CD8-positive, alpha-beta T cell (primary cell): ENCODE measurements at regions of chr18 and their contacts with region 1.

Region 1: GRCh38 chr18:28504100-28504499 is 327.2 kb upstream of the CDH2 start:
- DNase-seq: no peak
- ATAC-seq: no peak
- H3K4me3 ChIP-seq: no peak overlapping the region
- H3K4me3 Mint-ChIP-seq: no peak overlapping the region
- H3K27ac ChIP-seq: no peak overlapping the region
- H3K27ac Mint-ChIP-seq: no peak overlapping the region
- H3K4me1 ChIP-seq: no peaks in the 10 kb centered on the region
- H3K4me1 Mint-ChIP-seq: no peaks in the 10 kb centered on the region
- H3K27me3 ChIP-seq: no peaks in the 10 kb centered on the region
- H3K27me3 Mint-ChIP-seq: no peaks in the 10 kb centered on the region
- CTCF ChIP-seq: no peak

Region 2: DNA sequence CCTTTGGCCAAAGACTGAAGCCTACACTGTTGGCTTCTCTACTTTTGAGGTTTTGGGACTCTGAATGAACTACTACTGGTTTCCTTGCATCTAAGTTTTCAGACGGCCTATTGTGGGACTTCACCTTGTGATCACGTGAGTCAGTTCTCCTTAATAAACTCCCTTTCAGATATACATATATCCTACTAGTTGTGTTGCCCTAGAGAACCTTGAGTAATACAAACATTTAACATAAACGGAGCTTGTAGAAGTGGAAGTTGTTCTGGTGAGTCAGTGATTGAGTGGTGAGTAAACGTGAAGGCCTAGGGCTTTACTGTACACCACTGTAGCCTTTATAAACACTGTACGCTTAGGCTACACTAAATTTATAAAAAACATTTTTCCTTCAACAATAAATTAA is 220.0 kb before region 1 on chr18:
- CTCF ChIA-PET with region 1: no interaction called
- POLR2A ChIA-PET with region 1: no interaction called
- intact Hi-C with region 1: no loop called
- DNase-seq: no peak
- ATAC-seq: no peak
- H3K4me3 ChIP-seq: no peak overlapping the region
- H3K4me3 Mint-ChIP-seq: no peak overlapping the region
- H3K27ac ChIP-seq: no peak overlapping the region
- H3K27ac Mint-ChIP-seq: no peak overlapping the region
- H3K4me1 ChIP-seq: no peaks in the 10 kb centered on the region
- H3K4me1 Mint-ChIP-seq: no peaks in the 10 kb centered on the region
- H3K27me3 ChIP-seq: no peaks in the 10 kb centered on the region
- H3K27me3 Mint-ChIP-seq: no peaks in the 10 kb centered on the region
- CTCF ChIP-seq: no peak

Region 3: GRCh38 chr18:28459587-28459986 is 44.5 kb before region 1 on chr18:
- CTCF ChIA-PET with region 1: no interaction called
- POLR2A ChIA-PET with region 1: no interaction called
- intact Hi-C with region 1: loop called in 1 of 2 experiments (anchors 5 kb)
- DNase-seq: no peak
- ATAC-seq: no peak
- H3K4me3 ChIP-seq: no peak overlapping the region
- H3K4me3 Mint-ChIP-seq: no peak overlapping the region
- H3K27ac ChIP-seq: no peak overlapping the region
- H3K27ac Mint-ChIP-seq: no peak overlapping the region
- H3K4me1 ChIP-seq: no peaks in the 10 kb centered on the region
- H3K4me1 Mint-ChIP-seq: no peaks in the 10 kb centered on the region
- H3K27me3 ChIP-seq: no peaks in the 10 kb centered on the region
- H3K27me3 Mint-ChIP-seq: no peaks in the 10 kb centered on the region
- CTCF ChIP-seq: no peak